ENCODE measurements at regions of chr16 and their contacts with region 1.

Region 1: GRCh38 chr16:28924732-28925385 is at the start of gene RABEP2:
- DNase-seq: peak; percentile 94
- total RNA-seq, gene RABEP2: 14.3 TPM

Region 2: GRCh38 chr16:28553776-28554633 is 370.9 kb before region 1 on chr16 and contains the start of gene SGF29:
- intact Hi-C with region 1: no loop called
- DNase-seq: peak; percentile 96
- total RNA-seq, gene SGF29: 14.0 TPM

Region 3: DNA sequence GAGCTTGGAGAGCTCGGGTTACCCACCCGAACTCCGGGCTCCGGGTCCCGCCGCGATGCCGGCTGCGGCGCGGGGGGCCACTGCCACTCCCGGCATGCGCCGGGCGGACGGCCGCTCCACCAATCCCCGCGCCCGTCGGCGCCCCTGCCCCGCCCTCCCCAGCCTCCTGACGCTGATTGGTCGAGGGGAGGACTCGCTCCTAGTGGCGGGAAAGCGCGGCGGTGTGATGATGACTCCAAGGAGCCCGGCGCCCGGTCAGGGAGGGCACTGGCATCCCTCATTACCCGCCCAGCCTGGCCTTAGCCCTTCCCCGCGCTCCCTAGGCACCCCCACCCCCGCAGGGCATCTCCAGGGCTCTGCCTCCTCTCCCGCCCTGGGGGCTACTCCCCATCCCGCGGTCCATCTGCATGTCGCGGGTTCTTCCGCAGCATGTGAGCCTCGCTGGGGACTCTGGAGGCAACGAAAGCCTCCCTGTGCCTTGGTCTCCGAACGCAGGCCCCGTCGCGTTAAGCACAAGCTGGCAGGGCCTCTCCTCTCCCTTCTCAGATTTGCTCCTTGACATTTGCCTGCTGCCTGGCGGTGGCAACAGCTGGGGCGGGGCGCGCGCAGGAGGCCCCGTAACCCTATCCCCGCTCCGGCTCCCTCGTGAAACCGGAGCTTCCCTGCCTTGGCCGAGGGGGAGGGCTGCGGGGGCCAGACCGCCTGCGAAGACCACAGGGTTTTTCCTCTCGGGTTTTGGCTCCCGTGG is 44.8 kb before region 1 on chr16:
- intact Hi-C with region 1: loop called (anchors 5 kb)
- DNase-seq: peak; percentile 93

Region 4: DNA sequence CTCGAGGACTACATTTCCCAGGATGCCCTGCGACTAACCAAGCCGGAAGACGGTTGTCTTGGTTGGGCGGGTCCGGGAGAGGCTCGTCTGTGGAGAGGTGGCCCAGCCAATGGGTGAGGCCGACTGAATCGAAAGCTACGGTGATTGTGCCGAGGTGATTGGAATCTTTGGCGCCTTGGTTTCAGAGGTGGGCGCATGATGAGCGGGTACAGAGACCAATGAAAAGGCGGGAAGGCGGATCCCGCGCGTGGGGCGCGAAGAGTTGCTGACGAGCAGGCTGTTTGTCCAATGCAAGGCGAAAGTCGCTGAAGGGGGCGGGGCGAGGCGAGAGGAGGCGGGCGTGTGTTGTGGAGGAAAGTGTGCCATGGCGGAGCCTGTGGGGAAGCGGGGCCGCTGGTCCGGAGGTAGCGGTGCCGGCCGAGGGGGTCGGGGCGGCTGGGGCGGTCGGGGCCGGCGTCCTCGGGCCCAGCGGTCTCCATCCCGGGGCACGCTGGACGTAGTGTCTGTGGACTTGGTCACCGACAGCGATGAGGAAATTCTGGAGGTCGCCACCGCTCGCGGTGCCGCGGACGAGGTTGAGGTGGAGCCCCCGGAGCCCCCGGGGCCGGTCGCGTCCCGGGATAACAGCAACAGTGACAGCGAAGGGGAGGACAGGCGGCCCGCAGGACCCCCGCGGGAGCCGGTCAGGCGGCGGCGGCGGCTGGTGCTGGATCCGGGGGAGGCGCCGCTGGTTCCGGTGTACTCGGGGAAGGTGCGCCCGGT is 26.0 kb after region 1 on chr16 and contains the start of gene NFATC2IP:
- intact Hi-C with region 1: loop called (anchors 2 kb)
- DNase-seq: peak; percentile 100
- total RNA-seq, gene NFATC2IP: 17.9 TPM